Psoas muscle (tissue), 8 donors: ENCODE measurements at regions of chr3 and their contacts with region 1.

Region 1: GRCh38 chr3:30042274-30042859 is 564.0 kb upstream of the TGFBR2 start:
- DNase-seq: peak; percentile 28 to 56
- ATAC-seq: peak in 3 of 4 donors; percentile 61 to 82 (median 64)
- H3K4me3 ChIP-seq: no peak overlapping the region
- H3K27ac ChIP-seq: no peak overlapping the region
- H3K4me1 ChIP-seq: no peaks in the 10 kb centered on the region
- H3K27me3 ChIP-seq: no peaks in the 10 kb centered on the region
- CTCF ChIP-seq: peak; percentile 84

Region 2: GRCh38 chr3:30112902-30113484 is 70.6 kb after region 1 on chr3:
- intact Hi-C with region 1: loop called in 1 of 2 experiments (anchors 10 kb)
- DNase-seq: no peak
- ATAC-seq: no peak
- H3K4me3 ChIP-seq: no peak overlapping the region
- H3K27ac ChIP-seq: no peak overlapping the region
- H3K4me1 ChIP-seq: no peaks in the 10 kb centered on the region
- H3K27me3 ChIP-seq: no peaks in the 10 kb centered on the region
- CTCF ChIP-seq: peak; percentile 65

Region 3: GRCh38 chr3:30199096-30199759 is 156.9 kb after region 1 on chr3:
- intact Hi-C with region 1: loop called (anchors 1 to 2 kb)
- DNase-seq: peak; percentile 68 to 81
- ATAC-seq: peak; percentile 54 to 78 (median 60)
- H3K4me3 ChIP-seq: no peak overlapping the region
- H3K27ac ChIP-seq: no peak overlapping the region
- H3K4me1 ChIP-seq: no peaks in the 10 kb centered on the region
- H3K27me3 ChIP-seq: no peaks in the 10 kb centered on the region
- CTCF ChIP-seq: peak; percentile 89

Region 4: DNA sequence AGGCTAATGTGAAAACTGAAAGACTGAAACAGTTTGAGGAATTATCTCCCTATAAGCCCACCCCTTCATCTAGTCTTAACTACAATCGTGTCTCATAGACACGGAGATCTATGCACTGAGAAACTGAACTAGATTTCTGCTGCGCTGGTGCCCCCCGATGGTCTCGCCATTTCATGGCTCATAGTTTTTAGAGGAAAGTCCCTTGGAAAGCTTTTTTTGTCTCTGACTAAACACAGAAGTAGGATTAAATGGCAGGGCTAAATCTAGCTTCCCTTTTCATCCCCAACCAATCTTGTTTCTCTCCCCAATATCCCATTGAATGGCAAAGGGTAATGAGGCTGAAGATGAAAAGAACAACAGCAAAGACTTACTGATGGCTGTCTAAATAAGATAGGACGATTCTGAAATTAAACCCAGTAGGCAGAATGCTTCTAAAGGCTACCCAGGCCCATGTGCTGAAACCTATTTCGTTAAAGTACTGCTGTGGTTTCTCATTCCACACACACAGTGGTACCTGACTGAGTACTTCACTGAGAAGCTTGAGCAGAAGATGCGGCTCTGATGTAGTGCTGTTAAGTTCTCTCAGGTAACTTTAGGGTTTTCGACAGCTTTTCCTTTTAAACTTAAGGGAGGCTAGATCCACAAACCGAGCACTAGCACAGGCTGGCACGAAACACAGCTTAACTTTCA is 709.4 kb after region 1 on chr3:
- intact Hi-C with region 1: loop called in 1 of 2 experiments (anchors 10 kb)
- DNase-seq: peak in 1 of 2 donors; percentile 52
- ATAC-seq: peak in 3 of 4 donors; percentile 40 to 57 (median 54)
- H3K4me3 ChIP-seq: no peak overlapping the region
- H3K27ac ChIP-seq: peak overlapping the region; percentile 27
- H3K4me1 ChIP-seq: peaks cover 24% of the 10 kb centered on the region
- H3K27me3 ChIP-seq: no peaks in the 10 kb centered on the region
- CTCF ChIP-seq: peak; percentile 30